HepG2 (cell line): ENCODE measurements at regions of chr2 and their contacts with region 1.

Region 1: GRCh38 chr2:20635675-20636584 is 15.0 kb downstream of the HS1BP3 start:
- DNase-seq: peak; percentile 74
- ATAC-seq: peak; percentile 96
- H3K4me3 ChIP-seq: no peak overlapping the region; a peak in 1 of 6 replicates
- H3K27ac ChIP-seq: peak overlapping the region; percentile 23
- H3K4me1 ChIP-seq: peaks cover 55% of the 10 kb centered on the region
- H3K27me3 ChIP-seq: no peaks in the 10 kb centered on the region
- CTCF ChIP-seq: peak; percentile 100
- EP300 ChIP-seq: peak in 1 of 2 experiments; percentile 29; a peak in 1 of 4 replicates
- POLR2A ChIP-seq: no peak
- RAD21 ChIP-seq: peak; percentile 100

Region 2: GRCh38 chr2:20398956-20399567 is 236.9 kb before region 1 on chr2:
- CTCF ChIA-PET with region 1: interaction called, 26 read pairs
- POLR2A ChIA-PET with region 1: interaction called, 3 read pairs
- in situ Hi-C with region 1: loop called (anchors 5 kb)
- intact Hi-C with region 1: loop called (anchors 1 kb)
- DNase-seq: no peak
- ATAC-seq: no peak
- H3K4me3 ChIP-seq: no peak overlapping the region
- H3K27ac ChIP-seq: no peak overlapping the region
- H3K4me1 ChIP-seq: no peaks in the 10 kb centered on the region
- H3K27me3 ChIP-seq: peaks cover 2 to 38% of the 10 kb centered on the region in 2 experiments
- CTCF ChIP-seq: no peak
- EP300 ChIP-seq: no peak
- POLR2A ChIP-seq: no peak
- RAD21 ChIP-seq: no peak

Region 3: DNA sequence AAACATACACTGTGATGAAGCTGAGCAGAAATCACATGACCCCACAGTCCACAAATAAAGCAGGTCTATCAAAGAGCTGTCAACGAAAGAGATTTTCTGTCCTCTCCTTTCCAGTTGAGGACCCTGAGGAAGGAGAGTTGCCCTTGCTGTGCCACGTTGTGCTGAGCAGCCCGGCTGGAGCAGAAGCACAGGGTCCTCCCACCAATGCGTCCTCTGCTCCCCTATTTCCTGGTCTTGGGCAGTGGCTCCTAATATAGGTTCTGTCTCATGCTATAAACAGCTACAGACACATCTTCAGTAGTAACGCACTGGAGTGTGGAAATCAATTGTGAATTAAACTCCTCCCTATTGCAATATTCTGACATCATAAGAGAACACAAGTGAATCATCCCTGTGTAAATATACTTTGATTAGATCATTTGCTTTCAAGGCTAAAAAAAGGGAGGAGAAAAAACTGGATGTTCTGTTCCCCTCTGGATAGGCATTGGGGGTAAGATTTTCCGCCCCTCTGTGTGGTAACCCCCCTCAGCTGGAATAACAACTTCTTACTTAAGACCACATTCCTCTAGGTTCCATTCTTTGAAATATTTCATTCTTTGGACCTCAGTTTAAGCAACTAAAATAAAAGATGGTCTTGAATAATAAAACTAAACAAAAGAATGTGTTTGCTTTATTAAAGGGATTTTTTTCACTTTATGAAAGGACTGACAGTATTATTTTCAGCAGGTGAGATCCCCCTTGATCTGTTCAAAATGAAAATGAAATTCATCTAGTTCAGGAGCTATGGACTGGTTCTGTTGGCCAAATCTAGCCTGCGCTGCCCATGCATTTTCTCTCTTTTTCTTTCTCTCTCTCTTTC is 197.4 kb before region 1 on chr2:
- CTCF ChIA-PET with region 1: interaction called, 51 read pairs
- POLR2A ChIA-PET with region 1: interaction called, 29 read pairs
- in situ Hi-C with region 1: no loop called
- intact Hi-C with region 1: loop called (anchors 1 kb)
- DNase-seq: peak; percentile 87
- ATAC-seq: peak; percentile 47
- H3K4me3 ChIP-seq: peak overlapping the region in 2 of 3 experiments; percentile 5 to 30; a peak in 3 of 6 replicates
- H3K27ac ChIP-seq: peak overlapping the region; percentile 43
- H3K4me1 ChIP-seq: peaks cover 53% of the 10 kb centered on the region
- H3K27me3 ChIP-seq: no peaks in the 10 kb centered on the region
- CTCF ChIP-seq: no peak
- EP300 ChIP-seq: peak; percentile 44 to 87; a peak in 3 of 4 replicates
- POLR2A ChIP-seq: no peak
- RAD21 ChIP-seq: no peak

Region 4: DNA sequence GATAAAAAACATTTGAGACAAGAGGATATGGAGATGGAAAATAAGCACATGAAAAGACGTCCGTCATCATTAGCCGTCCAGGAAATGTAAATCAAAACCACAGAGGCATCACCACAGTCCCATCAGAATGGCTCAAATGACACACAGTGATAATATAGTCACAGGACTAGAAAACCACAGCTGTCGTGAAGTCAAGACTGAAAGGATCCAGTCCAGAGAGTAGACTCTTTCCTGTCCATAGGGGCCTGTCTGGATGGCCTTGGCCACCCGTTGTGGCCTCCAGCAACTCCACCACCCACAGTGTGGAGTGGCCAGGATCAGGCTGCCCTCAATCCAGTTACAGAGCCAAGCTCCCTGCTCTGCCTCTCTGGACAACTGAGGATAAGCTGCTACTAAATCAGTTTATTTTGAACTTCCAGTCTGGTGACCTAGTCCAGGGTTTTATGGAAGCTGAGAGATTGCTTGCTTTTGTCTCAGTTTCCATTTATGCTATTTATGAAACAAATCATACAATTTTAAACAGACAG is 128.7 kb before region 1 on chr2:
- CTCF ChIA-PET with region 1: interaction called, 4 read pairs
- POLR2A ChIA-PET with region 1: interaction called, 6 read pairs
- in situ Hi-C with region 1: no loop called
- intact Hi-C with region 1: loop called (anchors 1 kb)
- DNase-seq: no peak
- ATAC-seq: peak; percentile 55
- H3K4me3 ChIP-seq: no peak overlapping the region
- H3K27ac ChIP-seq: peak overlapping the region; percentile 14
- H3K4me1 ChIP-seq: peaks cover 71% of the 10 kb centered on the region
- H3K27me3 ChIP-seq: no peaks in the 10 kb centered on the region
- CTCF ChIP-seq: no peak
- EP300 ChIP-seq: no peak
- POLR2A ChIP-seq: no peak
- RAD21 ChIP-seq: no peak

Region 5: GRCh38 chr2:20578895-20579825 is 56.8 kb before region 1 on chr2:
- CTCF ChIA-PET with region 1: no interaction called
- POLR2A ChIA-PET with region 1: interaction called, 11 read pairs
- in situ Hi-C with region 1: no loop called
- intact Hi-C with region 1: loop called (anchors 2 kb)
- DNase-seq: peak; percentile 100
- ATAC-seq: peak; percentile 83
- H3K4me3 ChIP-seq: 0 out of 6 replicates have a peak overlapping the region, but pooled peaks of 1 of the 3 experiments have one; percentile 0
- H3K27ac ChIP-seq: peak overlapping the region; percentile 97
- H3K4me1 ChIP-seq: peaks cover 98% of the 10 kb centered on the region
- H3K27me3 ChIP-seq: no peaks in the 10 kb centered on the region
- CTCF ChIP-seq: peak; percentile 21; the same call in 1 of the 2 replicates
- EP300 ChIP-seq: peak; percentile 93 to 98
- POLR2A ChIP-seq: peak in 1 of 2 experiments; percentile 49; a peak in 1 of 4 replicates
- RAD21 ChIP-seq: peak; percentile 75

Region 6: GRCh38 chr2:20595431-20596192 is 40.3 kb before region 1 on chr2:
- CTCF ChIA-PET with region 1: interaction called, 18 read pairs
- POLR2A ChIA-PET with region 1: interaction called, 30 read pairs
- in situ Hi-C with region 1: no loop called
- intact Hi-C with region 1: loop called (anchors 1 kb)
- DNase-seq: peak; percentile 66
- ATAC-seq: no peak
- H3K4me3 ChIP-seq: no peak overlapping the region
- H3K27ac ChIP-seq: peak overlapping the region; percentile 97
- H3K4me1 ChIP-seq: peaks cover 98% of the 10 kb centered on the region
- H3K27me3 ChIP-seq: no peaks in the 10 kb centered on the region; a peak in 1 of 5 replicates
- CTCF ChIP-seq: no peak
- EP300 ChIP-seq: peak in 1 of 2 experiments; percentile 62; a peak in 1 of 4 replicates
- POLR2A ChIP-seq: peak in 1 of 2 experiments; percentile 4; a peak in 1 of 4 replicates
- RAD21 ChIP-seq: peak; percentile 33; the same call in 1 of the 2 replicates

Region 7: DNA sequence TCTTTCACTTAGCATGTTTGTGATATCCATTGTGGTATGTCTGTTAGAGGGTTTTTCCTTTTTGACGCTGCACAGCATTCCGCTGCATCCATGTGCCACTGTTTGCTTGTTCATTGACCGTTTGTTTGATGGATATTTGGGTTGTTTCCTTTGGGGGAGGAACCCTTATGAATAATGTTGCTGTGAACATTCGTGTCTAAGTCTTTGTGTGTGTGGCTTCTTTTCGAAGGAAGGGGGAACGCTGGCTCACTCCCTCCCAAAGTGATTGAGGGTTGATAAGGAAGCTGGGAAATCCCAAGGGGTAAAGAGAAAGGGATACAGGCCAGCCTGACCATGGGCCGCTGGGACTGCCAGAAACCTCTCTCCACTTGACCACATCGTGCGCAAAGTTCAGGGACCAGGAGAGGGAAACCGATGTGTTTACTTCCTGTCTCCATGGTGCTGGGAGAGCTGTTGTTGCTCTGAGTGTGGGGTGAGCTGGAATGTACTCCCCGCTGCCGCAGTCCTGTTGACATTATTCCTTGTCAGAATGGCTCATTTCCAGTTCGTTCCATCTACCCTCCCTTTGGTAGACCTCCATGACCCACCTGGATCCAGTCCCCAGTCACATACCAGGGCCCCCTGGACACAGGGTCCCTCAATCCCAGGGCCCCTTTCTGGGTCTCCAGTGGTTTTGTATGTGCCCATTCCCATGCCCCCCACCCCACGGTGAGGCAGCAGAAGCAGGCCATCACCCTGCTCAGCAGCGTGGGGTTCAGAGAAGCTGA is 24.7 kb before region 1 on chr2:
- CTCF ChIA-PET with region 1: no interaction called
- POLR2A ChIA-PET with region 1: interaction called, 15 read pairs
- in situ Hi-C with region 1: no loop called
- intact Hi-C with region 1: no loop called
- DNase-seq: peak; percentile 100
- ATAC-seq: peak; percentile 94
- H3K4me3 ChIP-seq: peak overlapping the region in 1 of 3 experiments; percentile 35; a peak in 3 of 6 replicates
- H3K27ac ChIP-seq: peak overlapping the region; percentile 95
- H3K4me1 ChIP-seq: peaks cover 78% of the 10 kb centered on the region
- H3K27me3 ChIP-seq: no peaks in the 10 kb centered on the region
- CTCF ChIP-seq: peak; percentile 15; the same call in 1 of the 2 replicates
- EP300 ChIP-seq: peak; percentile 92 to 97
- POLR2A ChIP-seq: peak in 1 of 2 experiments; percentile 81; a peak in 2 of 4 replicates
- RAD21 ChIP-seq: peak; percentile 57